Heart right ventricle (tissue), 16 donors: ENCODE measurements at regions of chr9 and their contacts with region 1.

Region 1: DNA sequence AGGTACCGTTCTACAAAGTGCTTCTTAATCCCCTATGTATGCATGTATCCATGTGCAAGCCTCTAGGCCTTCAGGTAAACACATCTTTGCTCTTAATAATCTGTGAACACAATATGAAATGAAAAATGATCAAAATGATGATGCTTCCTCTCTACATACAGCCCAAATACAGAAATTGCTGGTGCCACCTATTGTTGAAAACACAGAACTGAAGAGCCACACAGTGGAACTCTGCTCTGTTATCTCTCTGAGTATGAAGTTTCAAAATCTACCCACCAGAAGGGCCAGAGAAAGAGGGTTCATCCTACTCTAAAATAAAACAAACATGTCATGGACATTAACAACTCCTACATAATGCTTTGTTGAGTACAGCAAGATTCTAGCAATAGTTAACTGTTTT is 71.3 kb downstream of the GLIS3 start:
- DNase-seq: no peak
- ATAC-seq: peak in 4 of 8 donors; percentile 62 to 75 (median 68)
- H3K4me3 ChIP-seq: no peak overlapping the region
- H3K27ac ChIP-seq: no peak overlapping the region
- H3K4me1 ChIP-seq: peaks cover 0 to 22% (median 0%) of the 10 kb centered on the region in 9 donors
- H3K27me3 ChIP-seq: no peaks in the 10 kb centered on the region
- CTCF ChIP-seq: peak; percentile 25 to 73 (median 56)

Region 2: GRCh38 chr9:3971391-3972082 is 257.1 kb before region 1 on chr9:
- intact Hi-C with region 1: loop called in 1 of 10 experiments (anchors 10 kb)
- DNase-seq: no peak
- ATAC-seq: no peak
- H3K4me3 ChIP-seq: no peak overlapping the region
- H3K27ac ChIP-seq: no peak overlapping the region
- H3K4me1 ChIP-seq: peaks cover 0 to 6% (median 0%) of the 10 kb centered on the region in 9 donors
- H3K27me3 ChIP-seq: peaks cover 0 to 3% (median 0%) of the 10 kb centered on the region in 7 donors
- CTCF ChIP-seq: no peak

Region 3: DNA sequence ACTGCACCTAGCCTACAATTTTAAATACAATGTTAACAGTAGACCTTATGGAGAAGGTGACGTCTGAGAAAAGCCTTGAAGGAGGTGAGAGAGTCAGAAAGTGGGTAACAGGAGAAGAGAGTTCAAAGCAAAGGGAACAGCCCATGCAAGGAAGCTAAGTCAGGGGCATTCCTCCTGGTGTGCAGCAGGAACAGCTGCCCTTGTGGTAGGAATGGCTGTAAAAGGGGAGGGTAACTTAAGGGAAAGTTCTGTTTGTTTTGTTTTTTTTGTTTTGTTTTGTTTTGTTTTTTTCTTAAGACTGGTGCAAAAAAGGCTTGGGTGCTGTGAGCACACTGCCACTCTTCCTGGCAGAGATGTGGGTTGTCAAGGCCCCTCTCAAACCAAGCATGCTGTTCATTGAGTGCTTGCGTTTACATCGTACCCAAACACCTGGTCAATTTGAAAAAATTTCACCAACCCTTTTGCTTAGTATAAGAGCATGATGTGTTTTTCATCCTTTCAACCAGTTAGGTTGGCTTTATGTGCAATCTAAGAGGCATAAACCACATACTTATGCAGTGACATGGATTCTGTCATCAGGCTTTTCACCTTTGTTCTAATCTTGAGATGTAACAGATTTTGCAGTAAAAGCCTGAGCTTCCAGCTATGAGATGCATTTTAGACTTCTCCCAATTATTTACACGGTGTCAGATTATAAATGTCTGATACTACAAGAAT is 208.4 kb before region 1 on chr9:
- intact Hi-C with region 1: no loop called
- DNase-seq: no peak
- ATAC-seq: no peak
- H3K4me3 ChIP-seq: no peak overlapping the region
- H3K27ac ChIP-seq: no peak overlapping the region
- H3K4me1 ChIP-seq: peaks cover 0 to 8% (median 0%) of the 10 kb centered on the region in 9 donors
- H3K27me3 ChIP-seq: no peaks in the 10 kb centered on the region
- CTCF ChIP-seq: no peak

Region 4: GRCh38 chr9:4277531-4277991 is 49.0 kb after region 1 on chr9:
- intact Hi-C with region 1: no loop called
- DNase-seq: no peak
- ATAC-seq: no peak
- H3K4me3 ChIP-seq: no peak overlapping the region
- H3K27ac ChIP-seq: no peak overlapping the region
- H3K4me1 ChIP-seq: peaks cover 0 to 8% (median 0%) of the 10 kb centered on the region in 9 donors
- H3K27me3 ChIP-seq: no peaks in the 10 kb centered on the region
- CTCF ChIP-seq: no peak

Region 5: DNA sequence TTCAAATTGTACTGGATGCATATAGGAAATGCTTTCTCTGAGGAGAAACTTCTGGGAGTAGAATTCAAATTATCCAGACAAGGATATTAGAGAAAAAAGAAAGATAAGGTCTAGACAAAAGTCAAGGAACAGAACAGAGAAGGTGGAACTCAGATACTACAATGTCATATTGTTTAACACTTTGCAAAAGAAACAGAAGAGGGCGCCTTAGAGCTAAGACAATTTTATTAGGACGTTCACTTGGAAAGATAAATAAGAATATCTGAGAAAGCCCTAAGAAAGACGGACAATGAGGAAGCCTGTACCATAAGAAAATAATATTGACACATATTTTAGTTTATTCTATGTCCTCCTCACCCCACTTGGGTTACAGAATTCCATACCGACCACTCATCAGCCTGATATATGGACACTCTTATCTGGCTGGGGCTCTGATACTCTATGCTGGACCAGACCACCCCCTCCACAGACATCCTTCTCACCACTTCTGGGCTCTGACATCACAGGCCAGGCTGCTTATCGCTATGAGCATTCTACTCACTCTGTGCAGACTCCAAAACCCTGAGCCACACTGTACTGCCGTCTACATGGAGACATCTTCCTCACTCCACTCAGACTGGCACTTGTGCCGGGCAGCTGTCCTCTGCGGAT is 521.5 kb after region 1 on chr9:
- intact Hi-C with region 1: no loop called
- DNase-seq: no peak
- ATAC-seq: peak in 7 of 8 donors; percentile 41 to 74 (median 62)
- H3K4me3 ChIP-seq: no peak overlapping the region
- H3K27ac ChIP-seq: no peak overlapping the region
- H3K4me1 ChIP-seq: peaks cover 0 to 7% (median 2%) of the 10 kb centered on the region in 9 donors
- H3K27me3 ChIP-seq: no peaks in the 10 kb centered on the region
- CTCF ChIP-seq: peak in 8 of 9 donors; percentile 24 to 73 (median 64)